GM12878 (cell line): ENCODE measurements at regions of chr12 and their contacts with region 1.

Region 1: GRCh38 chr12:88141770-88142609 is at the starts of genes CEP290 and TMTC3:
- DNase-seq: peak; percentile 97
- ATAC-seq: peak; percentile 94
- H3K4me3 ChIP-seq: peak within 1 kb of the TSS; percentile 96
- H3K27ac ChIP-seq: peak within 1 kb of the TSS; percentile 75
- H3K4me1 ChIP-seq: no peaks in the 10 kb centered on the region
- H3K27me3 ChIP-seq: no peaks in the 10 kb centered on the region
- CTCF ChIP-seq: no peak
- EP300 ChIP-seq: no peak
- POLR2A ChIP-seq: peak; percentile 84
- RAD21 ChIP-seq: no peak
- polyA plus RNA-seq, gene CEP290: 4.8 to 8.9 TPM
- polyA plus RNA-seq, gene TMTC3: 1.5 to 2.8 TPM

Region 2: DNA sequence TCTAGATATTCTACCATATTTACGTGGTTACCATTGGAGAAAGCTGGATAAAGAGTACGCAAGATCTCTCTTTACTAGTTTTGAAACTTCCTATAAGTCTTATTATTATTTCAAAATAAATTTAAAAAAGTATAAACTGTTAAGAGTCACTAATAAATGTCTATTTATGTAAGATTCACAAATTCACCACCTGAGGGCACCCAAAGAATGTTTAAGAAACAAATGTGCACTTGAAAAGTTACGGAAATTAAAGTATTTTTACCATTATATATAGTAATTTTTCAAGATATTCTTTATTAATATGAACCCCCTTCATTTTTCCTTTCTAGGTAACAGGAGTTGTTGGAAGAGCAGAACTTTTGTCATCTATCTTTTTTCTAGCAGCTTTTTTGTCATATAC is 12.0 kb after region 1 on chr12:
- CTCF ChIA-PET with region 1: interaction called, 14 read pairs
- POLR2A ChIA-PET with region 1: interaction called, 7 read pairs
- RAD21 ChIA-PET with region 1: interaction called, 4 read pairs
- SMC1A ChIA-PET with region 1: interaction called, 12 read pairs
- in situ Hi-C with region 1: no loop called
- intact Hi-C with region 1: no loop called
- DNase-seq: no peak
- ATAC-seq: 0 out of 3 replicates have a peak, but pooled peaks have one; percentile 25
- H3K4me3 ChIP-seq: no peak overlapping the region
- H3K27ac ChIP-seq: no peak overlapping the region
- H3K4me1 ChIP-seq: no peaks in the 10 kb centered on the region
- H3K27me3 ChIP-seq: no peaks in the 10 kb centered on the region
- CTCF ChIP-seq: peak in 1 of 3 experiments; percentile 17; a peak in 1 of 6 replicates
- EP300 ChIP-seq: no peak
- POLR2A ChIP-seq: no peak
- RAD21 ChIP-seq: peak; percentile 46; the same call in 1 of the 2 replicates

Region 3: DNA sequence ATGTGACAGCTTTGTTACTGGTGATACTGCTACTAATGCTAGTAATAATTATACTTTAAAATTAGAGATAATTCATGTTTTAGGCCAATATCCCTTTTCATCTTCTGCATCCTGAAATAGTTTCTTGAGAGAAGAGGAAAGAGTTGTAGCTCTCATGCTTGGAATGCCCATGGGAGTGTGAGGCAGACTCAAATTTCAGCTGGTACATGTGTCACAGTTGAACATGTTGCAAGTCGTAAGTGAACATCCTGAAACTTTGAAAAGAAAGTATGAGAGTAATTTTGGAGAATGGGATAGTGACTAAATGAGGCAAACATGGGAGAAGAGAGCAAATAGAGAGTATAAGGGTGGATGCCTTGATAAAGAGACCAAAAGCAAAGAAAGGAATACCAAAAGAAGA is 168.1 kb after region 1 on chr12:
- CTCF ChIA-PET with region 1: no interaction called
- POLR2A ChIA-PET with region 1: interaction called, 4 read pairs
- RAD21 ChIA-PET with region 1: no interaction called
- SMC1A ChIA-PET with region 1: interaction called, 12 read pairs
- in situ Hi-C with region 1: no loop called
- intact Hi-C with region 1: no loop called
- DNase-seq: no peak
- ATAC-seq: no peak
- H3K4me3 ChIP-seq: no peak overlapping the region
- H3K27ac ChIP-seq: no peak overlapping the region
- H3K4me1 ChIP-seq: no peaks in the 10 kb centered on the region
- H3K27me3 ChIP-seq: no peaks in the 10 kb centered on the region
- CTCF ChIP-seq: no peak
- EP300 ChIP-seq: no peak
- POLR2A ChIP-seq: no peak
- RAD21 ChIP-seq: no peak

Region 4: DNA sequence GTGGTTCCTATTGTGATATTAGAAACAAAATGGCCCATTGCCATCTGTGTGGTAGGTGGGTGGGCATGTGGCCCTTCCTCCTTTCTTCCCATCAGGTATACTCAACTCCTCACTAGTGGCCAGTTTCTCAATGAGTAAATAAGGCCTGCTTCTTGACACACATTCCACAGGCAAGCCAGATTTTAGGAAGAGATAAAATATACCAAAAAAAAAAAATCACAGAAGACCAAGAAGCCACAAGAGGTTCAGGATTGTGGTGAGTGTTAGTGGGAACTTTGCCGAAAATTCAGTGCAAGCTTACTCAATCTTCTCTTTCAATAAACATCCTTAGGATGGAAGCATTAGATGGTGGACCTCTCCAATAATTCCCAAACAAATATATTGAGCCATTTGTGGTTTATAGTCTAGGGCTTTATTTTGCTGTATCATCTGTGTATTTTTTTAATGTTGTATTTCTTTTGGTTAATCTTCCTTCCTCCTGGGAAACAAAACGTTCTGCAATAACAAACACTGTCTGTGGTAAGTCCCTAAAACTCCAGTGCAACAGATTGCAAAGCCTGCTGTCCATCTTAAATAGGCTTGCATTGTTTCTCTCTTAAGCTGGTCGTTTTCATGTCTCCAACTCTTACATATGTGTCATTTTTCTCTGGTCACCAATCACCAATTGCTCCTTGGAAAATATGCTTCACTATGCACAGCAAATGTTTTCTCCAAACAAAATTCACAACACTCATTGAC is 728.2 kb after region 1 on chr12:
- CTCF ChIA-PET with region 1: no interaction called
- POLR2A ChIA-PET with region 1: no interaction called
- RAD21 ChIA-PET with region 1: no interaction called
- SMC1A ChIA-PET with region 1: no interaction called
- in situ Hi-C with region 1: no loop called
- intact Hi-C with region 1: loop called (anchors 10 kb)
- DNase-seq: no peak
- ATAC-seq: peak; percentile 76
- H3K4me3 ChIP-seq: no peak overlapping the region
- H3K27ac ChIP-seq: no peak overlapping the region
- H3K4me1 ChIP-seq: no peaks in the 10 kb centered on the region
- H3K27me3 ChIP-seq: no peaks in the 10 kb centered on the region
- CTCF ChIP-seq: no peak
- EP300 ChIP-seq: peak; percentile 21 to 42; a peak in 1 of 4 replicates
- POLR2A ChIP-seq: no peak
- RAD21 ChIP-seq: no peak